ENCODE measurements at regions of chr18 and their contacts with region 1.

Region 1: DNA sequence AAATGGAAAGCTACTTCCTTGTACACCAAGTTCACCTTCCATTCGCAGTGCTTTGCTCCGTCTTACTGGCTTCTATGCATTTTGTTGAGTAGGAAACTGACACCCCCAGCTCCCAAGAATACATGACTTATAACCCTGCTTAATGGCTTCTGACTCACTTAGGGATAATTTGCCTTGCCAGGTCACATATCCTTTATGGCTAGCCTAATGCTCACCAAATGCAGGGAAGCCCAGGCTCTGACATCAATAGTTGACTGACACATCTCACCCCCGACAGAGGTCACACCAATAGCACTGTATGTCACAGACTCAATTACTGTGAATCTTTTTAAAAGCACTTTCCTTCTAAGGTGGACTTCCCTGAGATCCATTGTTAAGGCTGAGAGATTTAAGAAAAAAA is 147.2 kb downstream of the DTNA start:
- DNase-seq: no peak
- H3K4me3 Mint-ChIP-seq: no peak overlapping the region
- H3K27ac Mint-ChIP-seq: no peak overlapping the region
- H3K4me1 Mint-ChIP-seq: peaks cover 32% of the 10 kb centered on the region
- H3K27me3 Mint-ChIP-seq: peaks cover 11% of the 10 kb centered on the region

Region 2: DNA sequence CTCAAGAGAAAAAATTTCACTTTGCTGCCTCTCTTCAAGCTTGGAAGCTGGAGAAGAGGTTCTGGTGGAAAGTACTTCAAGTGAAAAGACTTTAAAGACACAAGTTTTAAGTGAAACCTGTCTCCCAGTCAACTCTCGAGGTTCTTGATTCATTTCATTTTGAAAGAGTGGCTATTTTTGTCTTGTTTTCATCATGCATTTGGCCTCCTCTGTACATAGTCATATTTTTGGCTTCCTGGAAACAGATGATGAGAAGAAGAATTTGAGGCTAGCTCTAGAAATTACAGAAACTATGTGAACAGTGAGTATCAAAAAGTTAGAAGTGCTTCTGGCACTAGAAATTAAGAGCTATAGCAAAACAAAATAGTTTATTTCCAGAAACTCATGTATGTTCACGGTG is 22.4 kb before region 1 on chr18:
- CTCF ChIA-PET with region 1: interaction called, 5 read pairs
- intact Hi-C with region 1: loop called (anchors 1 kb)
- DNase-seq: no peak
- H3K4me3 Mint-ChIP-seq: no peak overlapping the region
- H3K27ac Mint-ChIP-seq: peak overlapping the region; percentile 72
- H3K4me1 Mint-ChIP-seq: peaks cover 23% of the 10 kb centered on the region
- H3K27me3 Mint-ChIP-seq: peaks cover 13% of the 10 kb centered on the region

Region 3: GRCh38 chr18:34901299-34901698 is 44.0 kb after region 1 on chr18:
- CTCF ChIA-PET with region 1: no interaction called
- intact Hi-C with region 1: no loop called
- DNase-seq: no peak
- H3K4me3 Mint-ChIP-seq: no peak overlapping the region
- H3K27ac Mint-ChIP-seq: no peak overlapping the region
- H3K4me1 Mint-ChIP-seq: peaks cover 9% of the 10 kb centered on the region
- H3K27me3 Mint-ChIP-seq: no peaks in the 10 kb centered on the region

Region 4: GRCh38 chr18:35050028-35050546 is 192.8 kb after region 1 on chr18:
- CTCF ChIA-PET with region 1: no interaction called
- intact Hi-C with region 1: loop called (anchors 1 kb)
- DNase-seq: no peak
- H3K4me3 Mint-ChIP-seq: peak overlapping the region; percentile 62
- H3K27ac Mint-ChIP-seq: peak overlapping the region; percentile 81
- H3K4me1 Mint-ChIP-seq: peaks cover 79% of the 10 kb centered on the region
- H3K27me3 Mint-ChIP-seq: no peaks in the 10 kb centered on the region

Region 5: GRCh38 chr18:35095983-35096676 is 238.8 kb after region 1 on chr18:
- CTCF ChIA-PET with region 1: no interaction called
- intact Hi-C with region 1: loop called (anchors 1 kb)
- DNase-seq: no peak
- H3K4me3 Mint-ChIP-seq: no peak overlapping the region
- H3K27ac Mint-ChIP-seq: peak overlapping the region; percentile 0
- H3K4me1 Mint-ChIP-seq: peaks cover 43% of the 10 kb centered on the region
- H3K27me3 Mint-ChIP-seq: no peaks in the 10 kb centered on the region

Region 6: DNA sequence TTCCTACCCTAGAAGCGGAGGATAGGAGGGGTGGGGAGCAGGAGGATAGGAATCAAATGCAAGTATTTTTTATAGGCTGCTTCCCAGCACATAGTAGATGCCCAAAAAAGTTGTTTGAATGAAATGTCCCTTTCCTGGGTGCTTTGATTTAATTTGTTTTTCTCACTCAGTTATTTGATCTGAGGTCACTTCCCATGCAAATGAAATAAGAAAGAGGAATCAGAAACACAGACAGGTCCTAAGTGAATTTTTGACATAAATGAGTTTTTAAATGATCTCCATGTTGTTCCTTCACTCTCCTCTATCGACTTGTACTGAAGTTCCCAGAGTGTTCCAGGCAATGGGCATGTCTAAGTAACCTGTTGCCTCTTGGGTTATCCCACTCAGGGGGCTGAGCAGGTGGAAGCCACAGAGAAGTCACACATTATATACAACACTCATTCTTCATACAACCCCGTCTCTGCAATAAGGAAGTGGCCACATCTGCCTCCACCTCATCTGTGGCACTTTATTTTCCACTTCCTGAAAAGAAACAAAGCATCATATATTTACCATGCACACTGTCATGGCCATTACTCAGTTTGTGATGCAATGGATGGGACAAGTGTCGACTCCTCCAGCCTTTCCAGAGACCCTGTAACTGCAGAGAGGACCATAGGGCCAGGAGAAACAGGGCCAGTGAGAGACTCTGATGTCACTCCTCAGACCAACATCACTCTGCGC is 301.6 kb after region 1 on chr18:
- CTCF ChIA-PET with region 1: no interaction called
- intact Hi-C with region 1: loop called (anchors 1 kb)
- DNase-seq: peak; percentile 53
- H3K4me3 Mint-ChIP-seq: no peak overlapping the region
- H3K27ac Mint-ChIP-seq: peak overlapping the region; percentile 73
- H3K4me1 Mint-ChIP-seq: peaks cover 20% of the 10 kb centered on the region
- H3K27me3 Mint-ChIP-seq: no peaks in the 10 kb centered on the region

Region 7: GRCh38 chr18:35240664-35241447 is 383.5 kb after region 1 on chr18 and contains the start of gene ZNF397:
- CTCF ChIA-PET with region 1: no interaction called
- intact Hi-C with region 1: loop called (anchors 1 kb)
- DNase-seq: peak; percentile 98
- H3K4me3 Mint-ChIP-seq: peak within 1 kb of the TSS; percentile 94
- H3K27ac Mint-ChIP-seq: peak within 1 kb of the TSS; percentile 99
- H3K4me1 Mint-ChIP-seq: peaks cover 38% of the 10 kb centered on the region
- H3K27me3 Mint-ChIP-seq: no peaks in the 10 kb centered on the region
- total RNA-seq, gene ZNF397: 22.6 to 23.2 TPM

Region 8: GRCh38 chr18:35484034-35484433 is 626.7 kb after region 1 on chr18:
- CTCF ChIA-PET with region 1: no interaction called
- intact Hi-C with region 1: loop called (anchors 1 kb)
- DNase-seq: no peak
- H3K4me3 Mint-ChIP-seq: no peak overlapping the region
- H3K27ac Mint-ChIP-seq: no peak overlapping the region
- H3K4me1 Mint-ChIP-seq: peaks cover 60% of the 10 kb centered on the region
- H3K27me3 Mint-ChIP-seq: no peaks in the 10 kb centered on the region

Measured in activated naive CD4-positive, alpha-beta T cell treated with anti-CD3 and anti-CD28 coated beads for 36 hours (primary cell).